ENCODE measurements at regions of chr7 and their contacts with region 1.

Region 1: DNA sequence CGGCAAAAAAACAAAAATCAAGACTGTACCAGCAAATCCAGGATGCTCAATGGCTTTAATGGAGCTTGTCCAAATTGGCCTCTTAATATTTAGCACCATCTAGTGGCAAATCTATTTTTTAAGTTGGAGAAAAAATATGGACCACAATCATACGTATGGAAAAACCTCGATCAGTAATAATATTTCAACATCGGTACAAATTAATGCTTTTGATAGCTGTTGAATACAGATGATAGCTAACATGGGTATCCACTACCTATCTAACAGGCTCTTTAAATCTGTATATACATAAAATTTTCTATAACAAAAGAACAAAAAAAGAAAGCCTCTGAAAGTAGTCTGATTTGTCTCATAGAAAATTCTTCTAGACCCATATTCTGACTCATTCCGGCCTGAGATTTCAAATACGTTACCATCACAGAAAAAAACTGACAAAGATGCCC is 29.2 kb downstream of the COA1 start:
- DNase-seq: no peak
- ATAC-seq: peak; percentile 73
- H3K4me3 Mint-ChIP-seq: no peak overlapping the region
- H3K27ac Mint-ChIP-seq: peak overlapping the region; percentile 47
- H3K4me1 Mint-ChIP-seq: peaks cover 66% of the 10 kb centered on the region
- H3K27me3 Mint-ChIP-seq: no peaks in the 10 kb centered on the region

Region 2: GRCh38 chr7:43119371-43120075 is 580.6 kb before region 1 on chr7:
- CTCF ChIA-PET with region 1: no interaction called
- DNase-seq: no peak
- ATAC-seq: no peak
- H3K4me3 Mint-ChIP-seq: no peak overlapping the region
- H3K27ac Mint-ChIP-seq: no peak overlapping the region
- H3K4me1 Mint-ChIP-seq: no peaks in the 10 kb centered on the region
- H3K27me3 Mint-ChIP-seq: peaks cover 39% of the 10 kb centered on the region

Region 3: DNA sequence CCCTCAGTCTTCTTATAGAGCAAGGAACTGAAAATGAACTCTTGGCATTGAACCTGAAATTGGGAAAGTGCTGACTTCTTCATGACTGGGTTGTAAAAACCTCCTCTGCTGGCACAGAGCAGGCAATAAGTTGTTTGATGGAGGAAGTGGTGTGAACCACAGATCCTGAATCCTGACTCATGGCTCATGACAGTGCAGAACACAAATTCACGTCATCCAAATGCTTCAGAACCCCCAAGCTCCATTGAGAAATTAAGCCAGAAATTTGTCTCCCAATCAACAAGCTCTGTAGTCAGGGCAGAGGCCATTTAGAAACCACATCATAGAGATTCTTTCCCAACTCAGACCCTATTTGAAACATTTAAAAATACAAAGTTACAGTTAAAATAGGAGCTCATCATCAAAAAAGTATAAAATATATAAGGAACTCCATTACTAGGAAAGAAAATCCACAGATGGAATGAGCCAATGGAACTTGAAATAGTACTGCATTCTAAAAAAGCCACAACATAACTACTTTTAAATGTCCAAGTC is 127.5 kb before region 1 on chr7:
- CTCF ChIA-PET with region 1: interaction called, 16 read pairs
- DNase-seq: peak; percentile 81
- ATAC-seq: peak; percentile 89
- H3K4me3 Mint-ChIP-seq: no peak overlapping the region
- H3K27ac Mint-ChIP-seq: peak overlapping the region; percentile 71
- H3K4me1 Mint-ChIP-seq: peaks cover 53% of the 10 kb centered on the region
- H3K27me3 Mint-ChIP-seq: no peaks in the 10 kb centered on the region

Region 4: DNA sequence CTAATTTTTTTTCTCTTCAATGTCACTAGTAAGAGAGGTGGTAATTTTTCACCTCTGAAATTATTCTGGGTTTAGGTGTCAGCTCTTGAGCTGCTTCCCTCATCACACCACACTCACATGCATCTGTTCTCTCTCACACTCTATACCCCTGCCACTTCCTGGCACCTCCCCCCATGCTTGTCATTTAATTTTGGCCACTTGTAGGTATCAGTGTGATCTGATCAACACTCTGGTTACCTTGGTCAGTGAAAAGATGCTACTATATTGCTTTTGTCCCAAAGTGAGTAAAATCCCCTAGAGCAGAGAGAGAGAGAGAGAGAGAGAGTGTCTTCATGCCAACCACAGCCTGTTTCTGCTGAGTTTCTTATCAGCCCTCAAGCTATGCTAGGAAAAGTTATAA is 74.6 kb before region 1 on chr7:
- CTCF ChIA-PET with region 1: interaction called, 24 read pairs
- DNase-seq: peak; percentile 83
- ATAC-seq: peak; percentile 86
- H3K4me3 Mint-ChIP-seq: peak overlapping the region; percentile 8
- H3K27ac Mint-ChIP-seq: peak overlapping the region; percentile 75
- H3K4me1 Mint-ChIP-seq: peaks cover 84% of the 10 kb centered on the region
- H3K27me3 Mint-ChIP-seq: no peaks in the 10 kb centered on the region

Region 5: GRCh38 chr7:43647673-43648472 is 52.2 kb before region 1 on chr7:
- CTCF ChIA-PET with region 1: interaction called, 90 read pairs
- DNase-seq: peak; percentile 69
- ATAC-seq: peak; percentile 29
- H3K4me3 Mint-ChIP-seq: peak overlapping the region; percentile 76
- H3K27ac Mint-ChIP-seq: peak overlapping the region; percentile 97
- H3K4me1 Mint-ChIP-seq: peaks cover 95% of the 10 kb centered on the region
- H3K27me3 Mint-ChIP-seq: no peaks in the 10 kb centered on the region

Region 6: GRCh38 chr7:43686991-43687390 is 13.1 kb before region 1 on chr7:
- CTCF ChIA-PET with region 1: interaction called, 13 read pairs
- DNase-seq: no peak
- ATAC-seq: no peak
- H3K4me3 Mint-ChIP-seq: no peak overlapping the region
- H3K27ac Mint-ChIP-seq: no peak overlapping the region
- H3K4me1 Mint-ChIP-seq: peaks cover 23% of the 10 kb centered on the region
- H3K27me3 Mint-ChIP-seq: no peaks in the 10 kb centered on the region

Region 7: DNA sequence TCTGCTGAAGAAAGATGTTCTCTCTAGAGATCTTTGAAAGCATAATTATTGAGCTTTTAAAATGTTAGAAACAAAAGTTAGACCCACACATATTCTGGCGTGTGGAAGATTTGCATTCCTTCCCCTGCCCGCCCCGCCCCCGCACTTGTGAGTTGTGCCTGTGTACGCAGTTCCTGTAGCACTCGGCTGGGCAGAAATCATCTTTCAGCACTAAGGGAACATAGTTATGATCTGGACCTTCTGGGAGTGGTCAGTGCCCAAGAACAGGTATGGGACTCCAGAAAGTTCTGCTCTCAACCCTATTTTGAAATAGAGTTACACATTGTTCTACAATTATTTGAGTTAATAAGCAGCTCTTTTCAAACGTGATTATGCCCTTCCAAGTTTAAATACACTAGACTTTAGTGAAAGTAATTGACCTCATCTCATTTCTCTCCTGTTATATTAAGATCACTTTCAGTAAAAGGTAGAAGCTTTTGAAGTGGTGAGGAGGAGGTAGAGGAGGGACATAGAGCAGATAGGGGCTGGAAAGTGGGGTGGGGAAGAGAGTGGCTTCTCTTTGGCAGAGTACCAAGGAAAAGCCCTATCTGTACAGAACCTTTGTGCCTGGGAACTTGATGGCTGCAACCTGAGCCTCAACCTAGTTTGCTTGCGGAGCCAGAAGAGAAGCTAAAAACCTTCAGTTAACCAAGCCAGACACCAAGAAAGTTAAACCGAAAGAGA is 64.1 kb after region 1 on chr7:
- CTCF ChIA-PET with region 1: no interaction called
- DNase-seq: no peak
- ATAC-seq: no peak
- H3K4me3 Mint-ChIP-seq: no peak overlapping the region
- H3K27ac Mint-ChIP-seq: no peak overlapping the region
- H3K4me1 Mint-ChIP-seq: peaks cover 16% of the 10 kb centered on the region
- H3K27me3 Mint-ChIP-seq: no peaks in the 10 kb centered on the region